ENCODE measurements at regions of chr18 and their contacts with region 1.

Region 1: GRCh38 chr18:331221-331821 is 63.5 kb upstream of the THOC1 start:
- DNase-seq: no peak

Region 2: DNA sequence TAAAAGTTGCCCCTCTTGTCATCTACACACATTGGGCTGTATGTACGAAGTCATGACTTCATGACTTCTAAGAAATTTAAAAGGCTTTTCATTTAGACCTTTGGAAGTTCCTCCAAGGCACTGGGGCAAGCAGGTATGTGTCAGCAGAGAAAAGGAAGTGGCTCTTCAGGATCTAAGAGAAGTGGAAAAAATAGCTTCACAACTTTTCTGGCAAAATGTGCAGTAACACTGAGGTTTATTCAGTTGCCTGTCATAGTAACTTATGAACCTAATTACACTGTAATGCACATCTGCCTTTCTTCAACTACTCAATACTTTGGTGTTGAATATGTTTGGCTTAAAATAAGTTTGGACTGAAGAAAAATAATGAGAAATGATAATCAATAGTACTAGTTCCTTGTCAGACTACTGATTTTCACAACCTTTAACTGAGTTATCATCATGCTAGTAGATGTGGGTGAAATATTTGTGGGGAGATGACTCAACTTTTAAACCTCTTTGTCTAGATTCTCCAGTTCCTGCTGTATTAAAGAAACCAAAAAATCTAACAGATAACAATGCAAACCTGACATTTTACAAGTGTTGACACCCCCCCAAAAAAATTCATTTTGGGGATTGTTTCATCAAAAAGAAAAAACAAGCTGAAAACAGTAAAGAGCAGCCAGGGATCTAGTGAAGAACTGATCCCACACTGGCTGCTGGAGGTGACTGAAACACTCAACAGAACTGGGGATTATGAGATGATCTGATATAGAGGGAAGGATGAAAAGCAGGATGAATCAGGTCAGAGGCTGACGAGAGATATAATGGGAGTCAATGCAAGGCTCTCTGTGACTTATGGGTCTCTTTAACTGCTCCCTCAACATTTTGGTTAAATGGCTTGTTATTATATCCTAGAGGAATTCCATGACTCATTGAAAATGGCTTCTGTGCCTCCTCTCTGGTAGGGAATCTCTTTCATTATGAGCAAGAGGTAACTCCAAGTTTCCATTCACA is 84.6 kb after region 1 on chr18:
- intact Hi-C with region 1: no loop called
- DNase-seq: no peak

Region 3: DNA sequence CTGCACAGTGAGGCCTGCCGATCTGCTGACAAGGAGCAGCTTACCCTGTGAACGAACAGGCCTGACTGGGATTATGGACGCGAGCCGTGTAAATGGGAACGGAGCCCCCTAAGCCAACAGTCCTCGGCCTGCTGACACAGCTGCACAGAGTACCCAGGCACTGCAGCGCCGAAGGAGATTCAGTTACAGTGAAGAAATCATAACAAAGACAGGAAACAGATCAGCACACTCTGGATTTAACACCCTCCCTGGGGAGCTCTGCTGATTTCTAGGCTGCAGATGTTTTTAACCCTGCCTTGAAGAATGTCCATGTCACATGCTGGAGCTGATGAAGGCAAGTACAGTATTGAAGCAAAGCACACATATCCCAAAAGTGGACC is 125.8 kb after region 1 on chr18:
- intact Hi-C with region 1: loop called (anchors 5 kb)
- DNase-seq: peak; percentile 79